Cardiac septum (tissue), 1 donor: ENCODE measurements at regions of chr15 and their contacts with region 1.

Region 1: DNA sequence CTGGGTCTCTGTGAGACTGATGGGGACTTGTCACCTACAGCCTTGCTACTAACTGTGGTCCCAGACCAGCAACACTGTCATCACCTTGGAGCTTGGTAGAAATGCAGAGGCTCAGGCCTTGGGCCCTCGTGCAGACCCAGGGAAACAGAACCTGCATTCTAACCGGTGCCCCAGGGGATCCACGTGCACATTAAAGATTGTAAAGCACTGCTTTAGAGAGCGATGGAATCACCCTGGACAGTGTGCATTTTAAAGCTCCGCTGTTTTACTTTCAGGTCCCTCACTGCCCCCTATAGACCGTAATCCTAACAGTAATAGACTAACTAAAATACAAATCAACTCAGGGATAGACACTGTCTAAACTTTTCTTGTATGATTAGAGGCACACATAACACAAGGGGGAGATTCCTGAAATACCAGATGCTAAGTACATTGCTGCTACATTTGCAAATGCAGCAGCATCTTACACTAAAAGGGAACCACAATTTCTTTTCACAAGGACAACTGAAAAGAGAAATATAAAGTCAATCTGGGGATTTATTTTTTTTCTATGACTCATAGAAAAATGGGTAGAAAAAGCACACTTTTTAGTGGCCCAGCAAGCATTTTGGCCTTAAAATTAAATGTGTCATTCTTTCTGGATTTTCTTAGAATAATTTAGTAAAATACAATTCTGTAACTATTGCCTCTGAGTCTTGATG is 10.5 kb upstream of the SH3GL3 start:
- DNase-seq: no peak

Region 2: DNA sequence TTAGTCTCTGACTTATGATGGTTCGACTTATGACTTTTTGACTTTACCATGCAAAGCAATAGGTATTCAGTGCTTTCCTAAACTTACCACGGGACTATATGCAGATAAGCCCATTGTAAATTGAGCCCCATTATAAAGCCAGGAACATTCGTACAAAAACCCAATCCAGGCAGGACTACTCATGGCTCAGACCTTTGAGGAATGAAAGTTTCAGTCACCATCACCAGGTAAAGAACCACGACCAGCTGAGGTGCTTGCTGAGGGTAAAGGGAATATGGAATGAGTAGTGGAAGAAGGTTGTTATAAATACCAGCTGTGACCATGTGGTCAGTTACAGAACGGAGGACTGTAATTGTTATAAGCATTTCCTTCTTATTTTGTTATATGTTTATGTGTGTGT is 97.2 kb before region 1 on chr15:
- intact Hi-C with region 1: no loop called
- DNase-seq: no peak

Region 3: DNA sequence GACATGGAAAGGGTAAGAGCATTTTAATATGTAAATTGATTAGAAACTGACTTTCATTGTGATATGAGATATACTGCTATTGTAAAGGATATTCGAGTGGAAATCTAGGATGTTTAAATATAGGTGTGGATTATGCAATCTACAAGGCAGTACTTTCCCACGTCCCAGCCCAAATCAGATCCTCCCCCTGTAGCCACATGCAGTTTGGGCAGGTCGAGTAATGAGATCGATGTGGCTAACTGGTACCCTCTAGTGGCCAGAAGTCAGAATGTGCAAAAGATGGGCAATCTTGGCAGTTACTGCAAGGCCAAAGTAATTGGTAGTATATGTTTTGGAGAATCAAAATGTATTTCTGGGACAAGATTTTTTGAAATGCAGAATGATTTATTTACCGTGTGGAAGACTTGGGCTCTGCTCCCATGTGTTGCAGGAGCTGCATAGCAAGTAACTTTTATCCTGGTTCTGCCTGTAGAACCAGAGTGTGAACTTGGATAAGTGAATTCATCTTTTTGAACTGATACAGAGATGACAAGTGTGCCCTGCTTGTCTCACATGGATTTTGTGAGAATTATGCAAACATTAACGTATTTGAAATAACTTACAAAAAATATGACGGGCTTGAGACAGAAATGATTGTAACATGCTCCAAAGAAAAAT is 122.8 kb after region 1 on chr15:
- intact Hi-C with region 1: loop called (anchors 5 kb)
- DNase-seq: peak; percentile 44

Region 4: GRCh38 chr15:83570756-83571155 is 134.1 kb after region 1 on chr15:
- intact Hi-C with region 1: no loop called
- DNase-seq: no peak